Dorsolateral prefrontal cortex (tissue), 120 donors: ENCODE measurements at regions of chr22 and their contacts with region 1.

Region 1: GRCh38 chr22:17830043-17830961 is 56.0 kb upstream of the BID start:
- DNase-seq: peak; percentile 74 to 94 (median 89)
- H3K4me3 ChIP-seq: no peak overlapping the region
- H3K27ac ChIP-seq: peak overlapping the region in 57 of 59 donors; percentile 5 to 88 (median 75)
- H3K27me3 ChIP-seq: no peaks in the 10 kb centered on the region
- CTCF ChIP-seq: peak; percentile 93 to 100 (median 99)

Region 2: DNA sequence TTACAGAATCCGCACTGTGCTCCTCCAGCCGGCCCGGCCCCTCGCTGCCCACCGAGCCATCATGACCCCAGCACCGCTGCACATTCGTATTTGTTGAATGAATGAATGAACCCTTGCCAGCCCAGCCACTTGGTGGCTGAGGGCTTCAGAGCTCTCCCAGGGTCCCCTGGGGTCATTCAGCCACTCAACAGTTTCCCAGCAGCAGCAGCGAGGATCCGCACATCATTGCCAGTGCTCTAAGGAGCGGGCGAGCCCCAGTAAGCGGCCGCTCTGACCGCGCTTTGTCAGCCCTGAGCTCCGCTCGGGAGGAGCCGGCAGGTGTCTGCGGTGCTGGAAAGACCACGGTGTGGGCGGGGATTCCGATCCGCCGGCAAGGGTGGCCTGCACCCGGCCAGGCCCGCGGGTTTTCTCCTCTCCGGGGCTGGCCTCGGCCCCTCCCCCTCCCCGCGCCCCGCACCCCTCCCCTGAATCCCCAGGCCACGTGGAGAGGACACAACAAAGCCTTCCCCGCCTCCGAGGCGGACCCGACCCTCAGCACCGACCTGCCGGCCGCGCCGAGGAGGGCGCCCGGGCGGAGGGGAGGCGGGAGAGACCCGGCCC is 56.6 kb before region 1 on chr22:
- intact Hi-C with region 1: no loop called
- DNase-seq: peak in 1 of 10 donors; percentile 77
- H3K4me3 ChIP-seq: peak overlapping the region; percentile 46 to 81 (median 69)
- H3K27ac ChIP-seq: peak overlapping the region in 52 of 59 donors; percentile 3 to 89 (median 69)
- H3K27me3 ChIP-seq: no peaks in the 10 kb centered on the region
- CTCF ChIP-seq: no peak

Region 3: DNA sequence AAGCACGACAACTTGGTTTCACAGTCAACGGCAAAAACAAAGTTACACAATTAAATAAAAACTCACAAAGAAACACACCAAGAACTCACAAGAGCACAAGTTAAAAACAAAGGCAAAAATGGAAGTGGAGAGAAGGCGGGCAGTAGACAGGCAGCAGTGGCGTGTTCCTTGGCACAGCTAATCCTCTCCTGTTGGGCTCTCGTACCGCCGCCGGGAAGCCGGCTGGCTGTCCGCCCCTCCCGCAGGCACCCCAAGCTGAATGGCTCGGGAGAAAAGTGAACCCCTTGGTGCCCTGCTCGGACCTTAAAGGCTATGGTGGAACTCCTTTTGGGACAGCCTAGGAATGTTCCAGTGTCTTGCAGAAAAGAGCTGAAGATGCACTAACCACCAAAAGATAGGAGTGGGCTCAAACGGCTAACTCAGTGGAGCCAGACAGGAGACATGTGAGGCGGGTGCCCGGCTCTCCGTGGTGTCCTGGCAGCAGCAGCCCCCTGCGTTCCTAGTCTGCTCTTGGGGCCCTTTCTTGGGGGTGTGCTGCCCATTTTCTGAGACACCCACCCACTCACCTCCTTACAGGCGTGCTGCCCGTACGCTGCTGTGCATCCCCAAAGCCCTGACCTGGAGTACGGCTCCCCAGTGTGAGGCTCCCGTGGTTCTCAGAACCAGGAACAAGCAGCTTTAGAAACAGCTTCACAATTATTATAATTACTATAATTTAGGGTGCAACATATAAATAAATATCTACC is 30.1 kb after region 1 on chr22:
- intact Hi-C with region 1: no loop called
- DNase-seq: peak in 5 of 10 donors; percentile 50 to 70 (median 60)
- H3K4me3 ChIP-seq: peak overlapping the region in 19 of 59 donors; percentile 3 to 37 (median 17)
- H3K27ac ChIP-seq: peak overlapping the region; percentile 1 to 99 (median 77)
- H3K27me3 ChIP-seq: no peaks in the 10 kb centered on the region
- CTCF ChIP-seq: no peak

Region 4: GRCh38 chr22:17872471-17872870 is 42.2 kb after region 1 on chr22:
- intact Hi-C with region 1: loop called (anchors 2 to 5 kb)
- DNase-seq: no peak
- H3K4me3 ChIP-seq: peak overlapping the region in 2 of 59 donors; percentile 4 to 17
- H3K27ac ChIP-seq: peak overlapping the region in 56 of 59 donors; percentile 42 to 99 (median 92)
- H3K27me3 ChIP-seq: no peaks in the 10 kb centered on the region
- CTCF ChIP-seq: peak in 2 of 56 donors; percentile 0 to 6

Region 5: DNA sequence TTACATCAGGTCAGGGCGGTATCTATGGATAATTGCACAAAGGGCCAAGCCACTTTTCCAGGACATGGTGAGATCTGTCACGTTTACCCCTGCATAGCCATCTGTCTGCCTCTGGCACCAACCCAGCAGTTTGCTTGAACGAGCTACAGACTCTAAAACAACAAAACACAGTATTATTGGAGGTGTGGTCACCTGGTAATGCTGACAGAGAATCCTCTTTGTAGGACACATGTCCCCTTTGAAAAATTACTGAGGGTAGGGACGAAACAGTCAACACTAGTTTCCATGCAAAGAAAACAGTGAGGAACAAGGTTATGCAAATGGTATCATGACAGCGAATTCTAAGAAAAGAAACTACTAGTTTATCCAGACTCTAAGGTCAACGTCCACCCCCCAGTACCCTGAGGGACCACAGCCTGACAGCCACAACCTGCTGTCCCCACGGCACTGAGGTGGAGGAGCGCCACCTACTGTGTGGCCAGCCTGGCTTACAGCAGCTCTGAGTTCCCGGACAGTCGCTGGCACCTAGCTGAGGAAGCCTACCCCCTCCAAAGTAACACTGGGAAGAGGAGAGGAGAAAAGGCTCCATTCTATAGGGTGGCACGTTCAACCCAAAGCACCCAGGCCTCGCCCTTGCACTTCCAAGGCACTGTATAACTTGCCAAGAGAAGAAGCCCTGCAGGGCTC is 61.3 kb after region 1 on chr22:
- intact Hi-C with region 1: loop called (anchors 1 to 5 kb)
- DNase-seq: peak in 7 of 10 donors; percentile 59 to 77 (median 65)
- H3K4me3 ChIP-seq: no peak overlapping the region
- H3K27ac ChIP-seq: peak overlapping the region in 52 of 59 donors; percentile 1 to 76 (median 55)
- H3K27me3 ChIP-seq: no peaks in the 10 kb centered on the region
- CTCF ChIP-seq: peak; percentile 11 to 81 (median 64)

Region 6: DNA sequence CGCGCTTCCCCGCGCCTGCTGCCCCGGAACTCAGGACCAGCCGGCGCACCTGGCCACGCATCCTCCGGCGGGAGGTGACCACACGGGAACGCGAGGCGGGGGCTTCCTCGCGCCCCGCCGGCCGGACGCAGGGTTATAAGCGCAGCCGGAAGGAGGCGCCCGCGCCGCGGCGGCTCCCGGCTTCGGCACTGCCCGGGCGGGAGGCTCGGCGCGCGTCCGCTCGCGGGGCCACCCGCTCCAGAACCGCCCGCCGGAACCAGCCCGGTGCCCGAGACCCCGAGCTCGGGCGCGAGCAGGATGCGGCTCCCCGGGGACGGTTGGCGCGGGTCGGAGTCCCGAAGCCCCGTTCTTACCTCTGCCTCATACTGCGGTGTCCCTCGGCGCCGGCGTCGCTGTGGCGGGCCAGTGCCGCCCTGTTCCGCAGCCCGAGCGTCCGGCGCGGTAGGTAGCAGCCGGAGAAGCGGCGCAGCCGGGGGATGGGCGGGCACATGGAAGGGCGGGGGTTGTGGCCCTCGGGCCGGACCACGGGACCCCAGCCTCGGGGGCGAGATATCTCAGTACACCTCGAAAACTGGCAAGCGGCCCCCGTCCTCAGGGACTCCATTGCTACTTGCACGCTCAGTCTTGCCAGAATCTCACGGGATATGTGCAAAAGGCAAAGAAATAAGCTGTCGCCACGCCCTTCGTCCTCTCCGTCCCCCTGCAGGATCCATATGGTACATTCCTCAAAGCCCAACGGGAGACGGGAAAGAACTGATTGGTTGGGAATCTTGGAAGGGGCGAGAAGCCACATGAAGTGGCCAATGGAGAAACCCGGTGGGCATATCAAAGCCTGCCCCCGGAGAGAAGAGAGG is 171.0 kb after region 1 on chr22:
- intact Hi-C with region 1: loop called in 1 of 2 experiments (anchors 10 kb)
- DNase-seq: peak; percentile 82 to 92 (median 89)
- H3K4me3 ChIP-seq: peak overlapping the region; percentile 56 to 96 (median 83)
- H3K27ac ChIP-seq: peak overlapping the region; percentile 76 to 99 (median 97)
- H3K27me3 ChIP-seq: no peaks in the 10 kb centered on the region
- CTCF ChIP-seq: peak in 52 of 56 donors; percentile 12 to 79 (median 48)